ENCODE measurements at regions of chr18 and their contacts with region 1.

Region 1: DNA sequence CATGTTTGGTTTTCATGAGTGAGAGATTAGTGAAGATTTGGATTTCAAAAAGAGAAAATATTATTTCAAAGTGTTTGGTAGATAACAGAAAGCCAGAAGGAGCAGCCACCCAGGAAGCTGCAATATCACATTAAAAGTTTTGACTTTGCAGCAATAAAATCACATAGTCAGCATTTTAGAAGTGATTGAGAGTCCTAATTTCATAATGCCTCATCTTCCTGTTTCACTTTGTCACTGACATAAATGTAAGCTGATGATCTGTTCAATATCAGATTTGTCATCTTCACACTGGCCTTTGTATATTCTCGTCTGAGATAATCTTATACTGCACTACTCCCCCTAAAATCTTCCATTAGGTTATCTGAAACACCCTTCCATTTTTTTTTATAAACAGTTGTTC is 690.5 kb downstream of the ADCYAP1 start:
- DNase-seq: no peak
- ATAC-seq: no peak
- H3K4me3 ChIP-seq: no peak overlapping the region
- H3K27ac ChIP-seq: no peak overlapping the region
- H3K4me1 ChIP-seq: no peaks in the 10 kb centered on the region
- H3K27me3 ChIP-seq: peaks cover 34% of the 10 kb centered on the region
- CTCF ChIP-seq: no peak

Region 2: DNA sequence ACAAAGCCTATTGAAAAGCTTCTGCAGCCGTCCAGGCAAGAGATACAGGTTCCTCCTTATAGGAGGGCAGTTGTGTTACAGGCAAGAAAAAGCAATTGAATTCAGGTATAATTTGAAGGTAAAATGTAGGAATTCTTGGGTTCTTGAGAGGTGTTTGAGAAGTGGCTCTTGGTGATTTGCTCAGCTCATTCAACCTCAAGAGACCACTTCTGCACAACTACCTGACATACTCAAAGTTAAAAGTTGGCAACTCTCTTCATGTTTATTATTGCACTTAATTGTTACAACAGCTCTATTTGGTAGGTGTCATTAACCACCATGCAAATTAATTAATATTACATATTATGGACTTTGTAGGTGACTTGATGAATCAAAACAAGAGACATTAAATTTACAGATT is 62.7 kb after region 1 on chr18:
- CTCF ChIA-PET with region 1: no interaction called
- POLR2A ChIA-PET with region 1: no interaction called
- intact Hi-C with region 1: loop called (anchors 2 kb)
- DNase-seq: no peak
- ATAC-seq: no peak
- H3K4me3 ChIP-seq: no peak overlapping the region
- H3K27ac ChIP-seq: no peak overlapping the region
- H3K4me1 ChIP-seq: no peaks in the 10 kb centered on the region
- H3K27me3 ChIP-seq: peaks cover 66% of the 10 kb centered on the region
- CTCF ChIP-seq: no peak

Measured in PC-3 (cell line).